HEK293T (cell line): ENCODE measurements at regions of chr1 and their contacts with region 1.

Region 1: GRCh38 chr1:44786138-44786840 is 1.7 kb downstream of the BEST4 start:
- DNase-seq: peak; percentile 79

Region 2: GRCh38 chr1:44799770-44800584 is 13.7 kb after region 1 on chr1 and contains the start of gene PLK3:
- CTCF ChIA-PET with region 1: interaction called, 3 read pairs
- POLR2A ChIA-PET with region 1: interaction called, 11 read pairs
- DNase-seq: peak; percentile 91